Motor neuron (in vitro differentiated cells): ENCODE measurements at regions of chr2 and their contacts with region 1.

Region 1: DNA sequence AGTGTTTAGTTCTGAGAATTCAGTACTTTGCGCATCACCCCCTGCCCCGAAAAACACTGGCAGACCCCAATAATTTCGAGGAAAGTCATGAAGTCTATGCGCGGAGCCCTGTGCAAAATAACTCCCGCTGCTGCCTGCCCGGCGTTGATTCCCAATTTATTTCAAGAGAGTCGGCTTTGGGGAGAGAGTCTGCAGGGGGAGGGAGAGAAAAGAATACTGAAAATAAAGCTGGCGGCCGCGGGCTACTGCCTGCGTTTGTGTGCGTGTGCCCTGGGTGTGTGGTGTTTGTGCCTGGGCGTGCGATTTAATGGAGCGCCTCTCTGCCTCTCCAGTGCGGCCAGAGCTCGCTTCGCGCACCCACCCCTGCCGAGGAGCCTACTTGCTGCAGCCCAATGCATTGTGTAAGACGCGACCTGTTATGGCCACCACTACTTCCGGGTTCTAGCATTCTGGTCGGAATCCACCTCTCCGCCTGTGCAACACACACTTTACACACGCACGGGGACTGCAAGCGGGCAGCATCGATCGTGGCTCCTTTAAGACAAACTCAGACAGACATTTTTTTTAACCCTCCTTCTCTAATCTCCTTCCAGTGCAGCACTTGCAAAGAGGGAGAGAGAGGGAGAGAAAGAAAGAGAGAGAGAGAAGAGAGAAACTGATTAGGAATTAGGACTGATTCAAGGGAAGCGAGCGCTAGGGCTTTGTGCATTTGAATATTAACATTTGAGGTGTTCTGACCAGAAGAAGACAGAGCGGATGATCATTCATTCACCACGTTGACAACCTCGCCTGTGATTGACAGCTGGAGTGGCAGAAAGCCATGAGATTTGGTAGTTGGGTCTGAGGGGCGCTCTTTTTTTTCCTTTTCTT is at the start of gene MEIS1:
- ATAC-seq: peak; percentile 62 to 76 (median 72)
- H3K4me3 ChIP-seq: peak within 1 kb of the TSS; percentile 57 to 66 (median 61)
- H3K27ac ChIP-seq: peak within 1 kb of the TSS; percentile 93 to 96
- H3K4me1 ChIP-seq: peaks cover 11% of the 10 kb centered on the region in 2 donors
- total RNA-seq, gene MEIS1: 11.7 to 241 (median 152) TPM

Region 2: DNA sequence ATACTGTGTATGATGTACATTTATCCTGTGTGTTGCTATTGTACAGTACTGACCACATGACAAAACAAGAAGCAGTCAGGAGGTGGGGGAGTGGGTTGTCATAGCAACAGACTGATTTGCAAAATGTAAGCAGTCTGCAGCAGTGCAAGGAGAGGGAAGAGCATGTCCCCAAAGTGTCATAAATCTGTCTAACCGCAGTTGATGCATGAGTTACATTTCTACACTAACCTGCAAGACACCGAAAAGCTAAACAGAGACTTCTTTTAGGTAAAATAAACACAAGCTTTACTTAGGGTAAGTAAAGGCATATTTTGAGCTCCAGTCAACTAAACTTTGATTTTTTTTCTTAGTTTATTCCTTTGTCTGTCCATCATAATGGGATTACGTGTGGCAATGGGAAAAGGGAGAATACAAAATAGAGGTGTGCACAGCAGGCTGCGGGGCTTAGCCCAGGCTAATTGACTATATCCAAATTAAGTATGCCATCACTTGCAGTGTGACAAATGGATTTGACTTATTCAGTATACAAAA is 134.5 kb after region 1 on chr2:
- in situ Hi-C with region 1: loop called in 2 of 9 experiments (anchors 10 kb)
- ATAC-seq: peak; percentile 81 to 91 (median 86)
- H3K4me3 ChIP-seq: no peak overlapping the region
- H3K27ac ChIP-seq: peak overlapping the region; percentile 65 to 72
- H3K4me1 ChIP-seq: peaks cover 94 to 96% of the 10 kb centered on the region in 2 donors

Region 3: GRCh38 chr2:67215214-67216055 is 780.5 kb after region 1 on chr2:
- in situ Hi-C with region 1: loop called in 1 of 9 experiments (anchors 25 kb)
- ATAC-seq: peak; percentile 51 to 99 (median 94)
- H3K4me3 ChIP-seq: no peak overlapping the region
- H3K27ac ChIP-seq: peak overlapping the region; percentile 23 to 29
- H3K4me1 ChIP-seq: peaks cover 6 to 41% of the 10 kb centered on the region in 2 donors

Region 4: DNA sequence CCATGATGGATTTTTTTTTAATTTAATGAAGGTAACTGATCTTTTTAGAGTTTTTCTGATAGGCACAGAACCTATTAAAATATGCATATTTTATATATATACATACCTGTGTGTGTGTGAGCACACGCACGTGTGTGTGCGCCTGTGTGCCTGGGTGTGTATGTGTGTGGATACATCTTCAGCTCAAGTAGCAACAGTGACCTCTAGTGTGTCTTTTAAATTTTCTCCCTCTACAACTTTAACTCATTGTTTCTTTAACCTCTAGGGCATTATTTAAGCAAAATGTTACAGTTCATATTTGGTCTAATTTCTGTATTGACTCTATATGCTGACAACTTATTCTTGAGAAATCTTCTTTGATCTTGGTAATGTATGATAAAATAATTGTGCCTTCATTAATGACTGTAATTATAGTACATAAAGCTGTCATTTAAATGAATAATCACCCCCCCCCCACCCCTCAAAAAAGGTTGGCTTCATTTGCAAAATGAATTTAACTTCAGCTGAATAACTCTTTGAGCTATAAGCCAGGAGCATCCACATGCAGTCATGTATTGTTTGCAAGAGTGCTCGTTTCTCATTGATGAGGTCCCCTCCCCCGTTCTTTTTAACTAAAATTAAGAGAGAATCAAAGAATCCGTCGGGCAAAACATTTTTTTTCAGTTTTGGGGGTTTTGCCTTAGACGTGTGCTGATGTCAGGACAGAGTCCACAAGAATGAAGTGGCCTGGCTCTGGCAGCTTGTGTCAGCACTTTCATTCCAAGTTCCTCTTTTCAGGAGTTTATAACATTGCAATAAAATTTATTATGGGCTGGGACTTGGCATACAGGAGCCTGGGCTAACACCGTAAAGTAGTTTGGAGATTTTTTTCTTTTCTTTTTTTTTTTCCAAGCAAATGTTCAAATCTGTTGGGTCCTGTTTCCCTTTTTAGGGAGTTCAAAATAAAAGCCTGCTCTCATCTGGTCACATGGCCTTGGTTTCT is 1042.2 kb after region 1 on chr2:
- in situ Hi-C with region 1: loop called in 1 of 9 experiments (anchors 25 kb)
- ATAC-seq: peak; percentile 47 to 80 (median 57)
- H3K4me3 ChIP-seq: no peak overlapping the region
- H3K27ac ChIP-seq: no peak overlapping the region
- H3K4me1 ChIP-seq: peaks cover 0 to 7% of the 10 kb centered on the region in 2 donors

Region 5: GRCh38 chr2:67840460-67841068 is 1405.7 kb after region 1 on chr2:
- in situ Hi-C with region 1: loop called in 2 of 9 experiments (anchors 25 kb)
- ATAC-seq: peak; percentile 97 to 100 (median 99)
- H3K4me3 ChIP-seq: no peak overlapping the region
- H3K27ac ChIP-seq: no peak overlapping the region
- H3K4me1 ChIP-seq: peaks cover 1 to 4% of the 10 kb centered on the region in 2 donors